Cardiac septum (tissue), 1 donor: ENCODE measurements at regions of chr10 and their contacts with region 1.

Region 1: GRCh38 chr10:74234569-74234968 is 83.5 kb downstream of the ADK start:
- DNase-seq: no peak

Region 2: DNA sequence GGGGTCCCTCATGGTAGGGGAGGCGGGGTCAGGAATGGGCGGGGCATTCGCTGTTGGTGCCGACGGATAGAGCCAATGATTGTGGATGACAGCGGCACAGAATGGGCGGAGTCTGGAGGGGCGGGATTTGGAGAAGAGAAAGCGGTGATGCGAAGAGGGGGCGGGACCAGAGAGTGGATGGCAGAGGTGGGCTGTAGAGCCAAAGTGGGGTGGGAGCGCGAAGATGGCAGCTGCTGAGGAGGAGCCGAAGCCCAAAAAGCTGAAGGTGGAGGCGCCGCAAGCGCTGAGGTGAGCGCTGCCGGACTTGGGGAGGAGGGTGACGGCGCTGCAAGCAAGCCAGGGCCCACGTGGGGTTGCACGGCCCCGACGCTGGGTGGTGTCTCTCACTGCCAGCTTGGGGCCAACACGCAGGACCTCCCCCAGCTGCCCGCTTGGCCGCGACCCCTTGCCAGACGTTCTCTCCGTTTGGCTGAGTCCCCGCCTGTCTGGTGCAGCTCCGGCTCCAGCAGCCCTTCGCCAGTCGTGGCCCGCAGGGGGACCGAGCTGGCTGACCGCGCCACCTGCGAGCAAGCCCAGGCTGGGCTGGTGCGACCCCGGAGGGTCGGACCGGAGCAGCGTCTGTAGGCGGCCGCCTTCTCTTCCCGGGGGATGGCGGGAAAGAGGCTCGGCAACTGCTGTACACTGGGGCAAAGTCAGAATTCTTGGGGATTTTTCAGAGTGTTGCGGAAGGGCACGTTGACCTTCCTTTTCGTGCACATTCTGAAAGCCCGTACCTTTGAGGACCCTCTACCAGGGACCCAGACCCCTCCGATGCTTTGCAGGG is 83.3 kb before region 1 on chr10 and contains the start of gene ADK:
- intact Hi-C with region 1: no loop called
- DNase-seq: peak; percentile 100
- total RNA-seq, gene ADK: 28.0 TPM

Region 3: GRCh38 chr10:74165530-74165901 is 69.1 kb before region 1 on chr10:
- intact Hi-C with region 1: loop called (anchors 10 kb)
- DNase-seq: no peak

Region 4: DNA sequence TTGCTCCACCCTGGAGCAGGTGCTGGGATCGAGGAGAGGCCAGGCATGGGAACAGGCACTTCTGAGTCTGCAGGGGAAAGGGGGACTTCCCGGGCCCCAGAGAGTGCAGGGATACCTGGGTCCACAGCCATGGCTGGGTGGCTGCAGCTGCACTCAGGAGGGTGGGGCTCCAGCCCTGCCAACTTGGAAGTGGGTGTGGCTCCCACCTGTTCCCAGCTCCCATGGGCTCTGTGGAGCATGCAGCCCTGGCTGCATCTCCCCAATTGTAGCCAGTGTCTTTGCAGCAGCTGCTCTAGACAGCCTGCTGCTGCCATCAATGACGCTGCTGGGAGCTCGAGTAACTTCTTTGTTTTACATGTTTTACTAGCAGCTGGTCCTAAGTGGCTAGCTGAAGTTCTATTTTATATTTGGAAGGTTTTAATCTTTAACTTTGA is 26.5 kb before region 1 on chr10:
- intact Hi-C with region 1: no loop called
- DNase-seq: no peak